ENCODE measurements at regions of chr9 and their contacts with region 1.

Region 1: DNA sequence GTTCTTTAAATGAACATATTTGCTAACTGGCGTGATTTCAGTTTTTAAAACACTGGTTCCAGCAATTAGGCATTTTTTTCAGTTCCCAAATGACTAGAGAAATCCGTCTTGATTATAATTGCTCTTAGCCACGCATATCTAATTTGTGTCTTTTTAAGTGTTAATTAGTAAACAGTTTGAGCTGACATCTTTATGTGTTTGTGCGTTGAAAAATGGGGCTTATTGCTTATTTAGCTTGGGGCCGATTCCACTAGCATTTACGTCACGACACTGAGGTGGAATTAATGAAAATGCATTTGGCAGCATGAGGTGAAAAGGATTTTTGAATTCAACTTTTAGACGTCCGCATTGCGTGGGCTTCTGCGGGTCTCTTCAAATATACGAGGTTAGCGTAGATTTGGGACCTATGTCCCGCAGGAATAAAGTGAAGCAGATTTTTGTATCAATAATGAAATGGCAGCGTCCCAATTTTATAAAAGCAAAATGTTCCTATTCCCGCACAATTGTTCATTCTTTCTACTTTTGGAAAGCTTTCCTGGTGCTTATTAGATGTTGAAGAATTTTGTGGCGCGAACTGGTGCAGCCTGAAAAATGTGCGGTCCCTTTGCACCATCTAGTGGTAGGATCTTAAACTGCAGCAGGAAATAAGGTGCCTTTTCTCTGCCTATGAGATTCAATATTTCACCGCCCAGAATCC is 122.7 kb upstream of the LMX1B start:
- DNase-seq: peak in 1 of 2 experiments; percentile 61
- ATAC-seq: peak; percentile 49 to 83; a peak in 5 of 6 replicates
- H3K4me3 ChIP-seq: no peak overlapping the region
- H3K27ac ChIP-seq: no peak overlapping the region
- H3K4me1 ChIP-seq: no peaks in the 10 kb centered on the region
- CTCF ChIP-seq: peak; percentile 90
- EP300 ChIP-seq: no peak
- POLR2A ChIP-seq: no peak
- RAD21 ChIP-seq: peak; percentile 92 to 94

Region 2: GRCh38 chr9:126293522-126293889 is 197.5 kb before region 1 on chr9:
- CTCF ChIA-PET with region 1: interaction called, 84 read pairs
- POLR2A ChIA-PET with region 1: no interaction called
- DNase-seq: no peak
- ATAC-seq: peak; percentile 17 to 72; a peak in 3 of 6 replicates
- H3K4me3 ChIP-seq: no peak overlapping the region
- H3K27ac ChIP-seq: no peak overlapping the region
- H3K4me1 ChIP-seq: no peaks in the 10 kb centered on the region
- CTCF ChIP-seq: peak; percentile 12; the same call in 2 of the 3 replicates
- EP300 ChIP-seq: no peak
- POLR2A ChIP-seq: no peak
- RAD21 ChIP-seq: no peak

Region 3: DNA sequence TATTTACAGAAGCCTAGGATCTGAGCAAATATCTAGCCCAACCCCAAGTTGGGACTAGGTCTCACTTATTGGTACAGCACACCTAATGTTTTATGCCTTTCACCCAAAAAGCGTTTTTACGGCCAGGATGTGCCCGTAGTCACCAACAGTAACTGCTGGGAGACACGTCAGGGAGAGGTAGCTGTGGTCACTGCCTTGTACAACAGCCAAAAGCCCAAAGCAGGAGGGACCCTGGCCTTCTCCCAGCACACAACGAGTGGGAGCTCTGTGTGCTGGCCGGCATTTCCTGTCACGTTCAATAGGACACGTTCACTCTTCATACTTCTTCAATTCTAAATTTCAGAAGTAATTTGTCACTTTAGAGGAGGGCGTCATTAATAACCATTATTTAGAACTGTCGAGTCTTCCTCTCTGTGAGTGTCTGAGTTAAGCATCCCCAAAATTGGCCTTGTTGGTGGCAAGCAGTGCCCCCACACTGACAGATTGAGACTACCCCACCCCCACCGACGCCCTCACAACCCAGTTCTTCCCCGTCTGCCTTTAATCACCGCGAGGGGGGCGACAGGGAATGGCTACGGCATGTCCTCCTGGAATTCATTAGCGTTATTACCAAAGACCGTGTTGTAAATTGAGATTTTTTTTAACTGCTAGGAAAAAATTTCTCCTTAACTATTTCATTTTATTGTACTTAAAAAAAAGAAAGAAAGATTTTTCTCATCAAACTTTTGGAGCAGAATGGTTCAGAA is 83.7 kb before region 1 on chr9:
- CTCF ChIA-PET with region 1: interaction called, 20 read pairs
- POLR2A ChIA-PET with region 1: no interaction called
- DNase-seq: no peak
- ATAC-seq: no peak
- H3K4me3 ChIP-seq: no peak overlapping the region
- H3K27ac ChIP-seq: no peak overlapping the region
- H3K4me1 ChIP-seq: no peaks in the 10 kb centered on the region
- CTCF ChIP-seq: no peak
- EP300 ChIP-seq: no peak
- POLR2A ChIP-seq: no peak
- RAD21 ChIP-seq: no peak

Region 4: DNA sequence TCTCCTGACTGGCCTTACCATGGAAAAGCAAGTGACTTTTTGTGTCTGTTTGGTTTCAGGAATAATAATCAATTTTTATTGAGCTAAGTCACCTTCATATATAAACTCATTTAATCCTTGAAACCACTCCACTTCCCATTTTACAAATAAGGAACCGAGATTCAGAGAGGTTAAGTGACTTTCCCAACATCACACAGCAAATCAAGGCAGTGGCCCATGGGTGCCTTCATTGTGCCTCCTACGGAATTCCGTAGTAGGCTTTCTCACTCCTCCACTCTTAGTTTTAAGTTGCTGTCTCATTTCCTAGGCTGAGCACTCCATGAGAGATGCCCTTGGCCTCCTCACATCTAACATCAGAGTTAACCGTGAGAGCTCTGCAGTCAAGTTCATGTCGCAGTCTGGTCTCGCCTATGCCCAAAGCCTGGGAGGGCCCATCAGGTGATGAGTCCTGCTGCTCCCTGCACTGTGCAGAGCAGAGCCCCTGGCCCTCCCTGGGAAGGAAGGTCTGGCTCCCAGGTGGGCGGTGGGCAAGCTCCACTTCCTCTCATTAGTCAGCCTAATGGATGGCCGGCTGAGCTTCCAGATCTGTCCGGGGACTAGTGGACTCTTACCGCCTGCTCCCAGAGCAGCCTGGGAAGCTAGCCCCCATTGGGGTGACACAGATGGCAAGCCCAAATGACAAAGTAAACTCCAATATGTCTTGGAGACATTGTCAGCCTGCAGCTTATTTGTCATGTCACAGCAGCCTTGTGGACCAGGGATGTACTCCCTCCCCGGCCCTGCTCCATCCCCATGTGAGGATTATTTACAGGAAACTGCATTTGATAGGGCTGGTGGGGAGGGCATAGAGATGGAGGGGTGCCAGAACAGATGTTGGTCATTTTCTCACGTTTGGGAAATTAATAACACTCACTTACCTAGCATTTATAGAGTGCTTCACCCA is 41.0 kb before region 1 on chr9:
- CTCF ChIA-PET with region 1: interaction called, 11 read pairs
- POLR2A ChIA-PET with region 1: no interaction called
- DNase-seq: no peak
- ATAC-seq: no peak
- H3K4me3 ChIP-seq: no peak overlapping the region
- H3K27ac ChIP-seq: no peak overlapping the region
- H3K4me1 ChIP-seq: no peaks in the 10 kb centered on the region
- CTCF ChIP-seq: no peak
- EP300 ChIP-seq: no peak
- POLR2A ChIP-seq: no peak
- RAD21 ChIP-seq: no peak

Region 5: GRCh38 chr9:126506361-126506941 is 15.4 kb after region 1 on chr9:
- CTCF ChIA-PET with region 1: interaction called, 178 read pairs
- POLR2A ChIA-PET with region 1: no interaction called
- DNase-seq: no peak
- ATAC-seq: no peak; a peak in 1 of 6 replicates
- H3K4me3 ChIP-seq: no peak overlapping the region
- H3K27ac ChIP-seq: no peak overlapping the region
- H3K4me1 ChIP-seq: no peaks in the 10 kb centered on the region
- CTCF ChIP-seq: no peak
- EP300 ChIP-seq: no peak
- POLR2A ChIP-seq: no peak
- RAD21 ChIP-seq: no peak

Region 6: DNA sequence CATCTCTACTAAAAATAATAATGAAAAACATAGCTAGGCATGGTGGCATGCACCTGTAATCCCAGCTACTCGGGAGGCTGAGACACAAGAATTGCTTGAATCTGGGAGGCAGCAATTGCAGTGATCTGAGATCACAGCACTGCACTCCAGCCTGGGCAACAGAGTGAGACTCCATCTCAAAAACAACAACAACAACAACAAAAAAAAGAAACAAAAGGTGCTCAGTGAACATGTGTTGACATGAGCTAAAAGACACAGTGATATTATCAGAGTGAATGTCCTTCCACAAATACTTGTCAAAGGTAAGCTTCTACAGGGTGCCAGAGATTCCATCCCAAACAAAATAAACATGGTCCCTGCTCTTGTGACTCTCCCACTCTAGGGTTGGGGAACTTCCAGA is 47.5 kb after region 1 on chr9:
- CTCF ChIA-PET with region 1: no interaction called
- POLR2A ChIA-PET with region 1: no interaction called
- DNase-seq: no peak
- ATAC-seq: no peak
- H3K4me3 ChIP-seq: no peak overlapping the region
- H3K27ac ChIP-seq: no peak overlapping the region
- H3K4me1 ChIP-seq: no peaks in the 10 kb centered on the region
- CTCF ChIP-seq: no peak
- EP300 ChIP-seq: no peak
- POLR2A ChIP-seq: no peak
- RAD21 ChIP-seq: no peak

Region 7: DNA sequence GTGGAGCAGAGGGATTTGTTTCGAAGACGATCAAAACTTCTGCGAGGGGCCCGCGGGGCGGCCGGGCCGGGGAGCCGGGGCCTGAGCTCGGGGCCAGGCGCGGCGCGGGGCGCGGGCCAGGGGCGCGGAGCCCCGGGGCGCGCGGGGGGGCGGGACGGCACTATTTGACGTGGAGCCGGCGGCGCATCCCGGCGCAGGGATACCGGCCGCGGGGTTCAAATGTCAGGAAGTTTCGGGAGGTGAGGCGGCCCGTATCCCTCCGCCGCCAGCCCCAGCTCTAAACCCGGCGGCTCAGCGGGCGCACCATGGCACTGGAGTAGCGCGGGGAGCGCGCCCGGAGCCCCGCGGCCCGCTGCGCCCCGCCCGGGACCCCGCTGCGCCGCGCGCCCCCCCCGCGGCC is 122.6 kb after region 1 on chr9 and contains the start of gene LMX1B:
- CTCF ChIA-PET with region 1: no interaction called
- POLR2A ChIA-PET with region 1: no interaction called
- DNase-seq: peak; percentile 89
- ATAC-seq: 0 out of 6 replicates have a peak, but pooled peaks of 1 of the 2 experiments have one; percentile 14
- H3K4me3 ChIP-seq: peak within 1 kb of the TSS; percentile 79
- H3K27ac ChIP-seq: peak within 1 kb of the TSS; percentile 66 to 83
- H3K4me1 ChIP-seq: peaks cover 17% of the 10 kb centered on the region
- CTCF ChIP-seq: no peak
- EP300 ChIP-seq: no peak
- POLR2A ChIP-seq: peak; percentile 39
- RAD21 ChIP-seq: no peak
- polyA plus RNA-seq, gene LMX1B: 0.41 and 0.48 TPM in 2 replicates